Activated T-helper 1 cell treated with anti-CD3 and anti-CD28 coated beads, Interleukin-12 subunit alpha, Interleukin-12 subunit beta, Interleukin-2, Interleukin-4 antibody, amounts not matched to agents 30 ng/mL and 10 ng/mL and 1 ng/mL, durations not matched to agents 14 hours and 24 hours and 36 hours (primary cell): ENCODE measurements at regions of chr9 and their contacts with region 1.

Region 1: GRCh38 chr9:7976167-7976755 is 176.7 kb upstream of the DMAC1 start:
- DNase-seq: peak; percentile 68
- H3K4me3 Mint-ChIP-seq: peak overlapping the region; percentile 15
- H3K27ac Mint-ChIP-seq: peak overlapping the region; percentile 73
- H3K4me1 Mint-ChIP-seq: peaks cover 63% of the 10 kb centered on the region
- H3K27me3 Mint-ChIP-seq: no peaks in the 10 kb centered on the region

Region 2: GRCh38 chr9:7298123-7298522 is 678.1 kb before region 1 on chr9:
- intact Hi-C with region 1: loop called (anchors 10 kb)
- DNase-seq: peak; percentile 6
- H3K4me3 Mint-ChIP-seq: no peak overlapping the region
- H3K27ac Mint-ChIP-seq: peak overlapping the region; percentile 18
- H3K4me1 Mint-ChIP-seq: peaks cover 11% of the 10 kb centered on the region
- H3K27me3 Mint-ChIP-seq: peaks cover 18% of the 10 kb centered on the region

Region 3: DNA sequence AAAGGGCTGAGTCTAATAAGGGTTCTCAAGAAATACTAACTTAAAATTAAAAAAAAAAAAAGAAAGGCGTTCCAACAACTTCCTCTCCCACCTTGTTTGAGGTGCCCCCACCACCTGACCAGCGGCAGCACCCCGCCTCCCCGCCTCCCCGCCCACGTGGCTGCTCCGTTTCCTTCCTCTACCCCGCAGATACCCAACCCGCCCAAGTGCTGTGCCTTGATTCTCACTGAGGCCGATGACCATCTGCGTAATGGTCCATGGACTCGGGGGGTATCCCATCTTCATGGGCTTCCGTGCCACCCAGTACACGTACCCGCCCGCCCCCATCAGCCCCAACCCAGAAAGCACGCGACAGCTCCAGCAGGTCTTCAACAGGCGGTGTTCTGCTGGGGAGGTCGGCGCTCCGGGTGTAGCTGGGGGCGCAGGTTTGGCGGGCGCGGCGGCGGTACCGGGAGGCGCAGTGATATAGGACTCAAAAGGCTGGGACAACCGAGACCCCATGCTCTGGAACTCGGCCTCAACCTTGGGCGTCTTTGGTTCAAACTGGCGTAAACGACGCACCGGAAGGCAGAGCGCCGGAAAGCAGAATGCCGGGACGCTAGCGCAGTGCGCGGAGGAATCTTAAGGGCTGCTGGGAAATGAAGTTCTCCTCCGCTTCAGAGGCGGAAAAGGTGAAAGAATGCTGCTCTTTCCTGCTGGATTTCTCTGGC is 176.9 kb before region 1 on chr9 and contains the start of gene DMAC1:
- intact Hi-C with region 1: loop called (anchors 1 kb)
- DNase-seq: peak; percentile 69
- H3K4me3 Mint-ChIP-seq: peak within 1 kb of the TSS; percentile 96
- H3K27ac Mint-ChIP-seq: peak within 1 kb of the TSS; percentile 94
- H3K4me1 Mint-ChIP-seq: peaks cover 20% of the 10 kb centered on the region
- H3K27me3 Mint-ChIP-seq: no peaks in the 10 kb centered on the region
- total RNA-seq, gene DMAC1: 45.3 and 46.4 TPM in 2 replicates

Region 4: GRCh38 chr9:7935681-7936080 is 40.6 kb before region 1 on chr9:
- intact Hi-C with region 1: loop called (anchors 1 kb)
- DNase-seq: peak; percentile 14
- H3K4me3 Mint-ChIP-seq: peak overlapping the region; percentile 74
- H3K27ac Mint-ChIP-seq: peak overlapping the region; percentile 80
- H3K4me1 Mint-ChIP-seq: peaks cover 18% of the 10 kb centered on the region
- H3K27me3 Mint-ChIP-seq: no peaks in the 10 kb centered on the region

Region 5: GRCh38 chr9:8437876-8438275 is 461.6 kb after region 1 on chr9:
- intact Hi-C with region 1: loop called (anchors 1 kb)
- DNase-seq: no peak
- H3K4me3 Mint-ChIP-seq: no peak overlapping the region
- H3K27ac Mint-ChIP-seq: no peak overlapping the region
- H3K4me1 Mint-ChIP-seq: no peaks in the 10 kb centered on the region
- H3K27me3 Mint-ChIP-seq: no peaks in the 10 kb centered on the region